Common myeloid progenitor, CD34-positive (primary cell): ENCODE measurements at regions of chr1 and their contacts with region 1.

Region 1: DNA sequence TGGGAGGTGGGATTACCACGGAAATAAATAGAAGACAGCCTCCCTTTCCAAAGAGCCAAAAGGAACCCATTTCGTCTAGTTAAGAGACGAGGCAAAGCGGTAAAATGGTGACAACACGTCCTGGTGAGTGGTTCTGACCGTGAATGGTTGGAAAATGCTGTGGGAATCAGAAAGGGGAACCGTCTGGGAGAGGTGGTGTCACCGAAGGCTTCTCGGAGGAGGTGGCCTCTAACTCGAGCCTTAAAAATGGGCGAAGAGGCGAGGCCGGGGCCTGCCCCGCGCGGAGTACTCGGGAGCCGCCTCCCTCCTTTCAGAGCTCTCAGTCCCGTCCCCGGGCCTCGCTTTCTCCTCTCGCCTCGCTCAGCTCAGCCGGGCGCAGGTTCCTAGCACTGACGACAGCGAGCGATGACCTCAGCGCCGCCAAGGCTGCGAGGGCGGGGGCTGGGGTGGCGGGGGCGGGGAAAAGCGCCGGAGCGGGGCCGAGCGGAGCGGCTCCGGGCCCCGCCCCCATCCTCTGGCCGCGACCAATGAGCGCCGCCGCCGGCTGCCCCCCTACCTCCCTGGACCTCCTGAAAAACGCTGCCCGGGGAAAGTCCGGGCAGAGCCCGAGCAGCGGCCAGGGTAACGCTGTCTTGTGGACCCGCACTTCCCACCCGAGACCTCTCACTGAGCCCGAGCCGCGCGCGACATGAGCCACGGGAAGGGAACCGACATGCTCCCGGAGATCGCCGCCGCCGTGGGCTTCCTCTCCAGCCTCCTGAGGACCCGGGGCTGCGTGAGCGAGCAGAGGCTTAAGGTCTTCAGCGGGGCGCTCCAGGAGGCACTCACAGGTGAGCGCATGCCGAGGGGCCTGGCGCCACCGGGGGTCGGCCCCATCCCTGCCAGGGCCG is at the start of gene BTG2:
- DNase-seq: peak; percentile 83 to 91 (median 91)
- H3K4me3 ChIP-seq: peak within 1 kb of the TSS; percentile 75 to 98 (median 89)
- H3K27ac ChIP-seq: peak within 1 kb of the TSS; percentile 80 to 91
- H3K4me1 ChIP-seq: peaks cover 34 to 79% (median 62%) of the 10 kb centered on the region in 4 experiments
- H3K27me3 ChIP-seq: no peaks in the 10 kb centered on the region

Region 2: GRCh38 chr1:203290261-203291089 is 14.7 kb before region 1 on chr1:
- CTCF ChIA-PET with region 1: interaction called, 135 read pairs
- POLR2A ChIA-PET with region 1: interaction called, 19 read pairs
- DNase-seq: peak; percentile 85 to 95 (median 95)
- H3K4me3 ChIP-seq: peak overlapping the region in 3 of 7 experiments; percentile 54 to 58 (median 55)
- H3K27ac ChIP-seq: peak overlapping the region; percentile 81 to 85
- H3K4me1 ChIP-seq: peaks cover 25 to 64% (median 58%) of the 10 kb centered on the region in 4 experiments
- H3K27me3 ChIP-seq: no peaks in the 10 kb centered on the region

Region 3: GRCh38 chr1:203320591-203321272 is 15.6 kb after region 1 on chr1:
- CTCF ChIA-PET with region 1: interaction called, 268 read pairs
- POLR2A ChIA-PET with region 1: interaction called, 121 read pairs
- DNase-seq: peak; percentile 95 to 100 (median 99)
- H3K4me3 ChIP-seq: peak overlapping the region in 3 of 7 experiments; percentile 13 to 52 (median 44)
- H3K27ac ChIP-seq: peak overlapping the region; percentile 59 to 85
- H3K4me1 ChIP-seq: peaks cover 33 to 84% (median 73%) of the 10 kb centered on the region in 4 experiments
- H3K27me3 ChIP-seq: no peaks in the 10 kb centered on the region

Region 4: DNA sequence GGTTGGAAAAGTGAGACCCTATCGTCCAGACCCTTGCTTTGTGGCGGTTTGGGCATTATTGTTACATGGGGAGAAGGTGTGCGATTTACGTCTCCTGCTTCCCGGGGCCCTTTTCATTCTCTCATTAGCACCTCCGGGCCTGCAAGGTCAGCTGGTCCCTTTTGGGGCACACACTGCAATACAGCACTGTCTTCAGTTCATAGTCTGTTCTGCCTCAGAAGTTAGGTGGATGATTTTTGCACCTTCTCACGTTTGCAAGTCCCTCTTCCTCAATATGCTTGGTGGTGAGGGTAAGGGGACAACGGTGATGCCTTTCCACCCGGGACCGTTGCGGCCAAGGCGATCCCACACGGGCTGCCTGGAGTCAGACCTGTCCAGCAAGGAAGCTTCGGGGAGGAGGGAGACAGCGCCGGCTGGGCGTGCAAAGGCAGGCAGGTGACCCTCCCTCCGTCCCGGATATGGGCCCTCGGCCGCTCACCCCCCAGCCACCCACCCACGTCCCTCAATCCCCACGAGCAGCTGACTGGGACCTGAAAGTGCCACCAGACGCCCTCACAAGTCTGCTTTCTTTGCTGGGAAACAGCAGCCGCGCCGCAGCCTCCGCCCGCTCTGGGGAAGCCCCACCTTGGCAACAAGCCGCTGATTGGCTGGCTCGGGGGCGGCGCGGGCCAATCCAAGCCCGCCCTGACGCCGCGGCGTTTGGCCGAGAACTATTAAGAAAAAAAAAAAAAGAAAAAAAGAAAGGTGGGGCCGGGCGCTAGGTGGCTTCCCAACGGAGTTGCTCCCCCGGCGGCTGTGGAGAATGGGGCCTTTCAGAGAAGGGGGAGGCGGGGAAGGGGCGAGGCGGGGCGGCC is 21.9 kb after region 1 on chr1:
- CTCF ChIA-PET with region 1: interaction called, 268 read pairs
- POLR2A ChIA-PET with region 1: interaction called, 121 read pairs
- DNase-seq: peak; percentile 94 to 98 (median 98)
- H3K4me3 ChIP-seq: peak overlapping the region in 5 of 7 experiments; percentile 35 to 63 (median 54)
- H3K27ac ChIP-seq: peak overlapping the region; percentile 75 to 88
- H3K4me1 ChIP-seq: peaks cover 32 to 70% (median 59%) of the 10 kb centered on the region in 4 experiments
- H3K27me3 ChIP-seq: no peaks in the 10 kb centered on the region

Region 5: DNA sequence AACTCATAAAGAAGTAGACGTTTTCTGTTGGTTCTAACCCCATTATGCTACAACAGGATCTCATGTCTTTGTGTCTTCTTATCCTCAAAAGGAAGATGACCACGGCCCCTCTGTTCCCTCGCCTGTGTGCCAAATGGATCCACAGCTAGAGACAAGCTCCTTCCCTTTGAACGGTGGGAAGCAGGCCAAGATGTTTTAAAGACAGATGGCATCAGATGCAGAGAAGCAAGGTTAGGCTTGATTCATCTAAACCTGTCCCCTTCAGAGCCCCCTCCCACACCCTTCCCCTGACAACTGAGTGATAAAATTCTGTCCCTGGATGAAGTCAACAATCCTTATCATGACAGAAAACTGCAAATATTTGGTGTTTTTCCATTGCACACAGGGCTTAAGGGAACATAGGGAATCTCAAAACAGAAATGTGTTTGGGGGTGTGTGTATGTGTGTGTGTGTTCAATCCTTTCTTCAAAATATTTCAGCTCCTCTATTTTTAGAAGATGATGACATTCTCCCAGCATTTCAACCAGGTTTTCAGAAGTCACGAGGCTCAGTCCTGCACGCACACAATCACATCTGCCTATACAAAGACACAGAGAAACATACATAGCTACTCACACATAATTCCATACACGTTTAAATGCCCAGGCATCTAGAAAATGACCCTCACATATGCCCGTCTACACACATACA is 73.5 kb after region 1 on chr1:
- CTCF ChIA-PET with region 1: no interaction called
- POLR2A ChIA-PET with region 1: no interaction called
- DNase-seq: no peak
- H3K4me3 ChIP-seq: no peak overlapping the region
- H3K27ac ChIP-seq: no peak overlapping the region
- H3K4me1 ChIP-seq: no peaks in the 10 kb centered on the region
- H3K27me3 ChIP-seq: peaks cover 0 to 5% (median 0%) of the 10 kb centered on the region in 5 experiments